ENCODE measurements at regions of chr11 and their contacts with region 1.

Region 1: GRCh38 chr11:109853156-109853776 is 239.9 kb upstream of the ZC3H12C start:
- DNase-seq: no peak
- ATAC-seq: peak; percentile 31
- H3K4me3 Mint-ChIP-seq: no peak overlapping the region
- H3K27ac Mint-ChIP-seq: no peak overlapping the region
- H3K4me1 Mint-ChIP-seq: no peaks in the 10 kb centered on the region
- H3K27me3 Mint-ChIP-seq: no peaks in the 10 kb centered on the region
- CTCF ChIP-seq: no peak

Region 2: GRCh38 chr11:109864834-109865547 is 11.7 kb after region 1 on chr11:
- CTCF ChIA-PET with region 1: interaction called, 9 read pairs
- POLR2A ChIA-PET with region 1: interaction called, 3 read pairs
- intact Hi-C with region 1: loop called (anchors 1 kb)
- DNase-seq: no peak
- ATAC-seq: no peak
- H3K4me3 Mint-ChIP-seq: no peak overlapping the region
- H3K27ac Mint-ChIP-seq: peak overlapping the region; percentile 74
- H3K4me1 Mint-ChIP-seq: peaks cover 17% of the 10 kb centered on the region
- H3K27me3 Mint-ChIP-seq: no peaks in the 10 kb centered on the region
- CTCF ChIP-seq: no peak

Region 3: GRCh38 chr11:109939166-109939810 is 86.0 kb after region 1 on chr11:
- CTCF ChIA-PET with region 1: interaction called, 38 read pairs
- POLR2A ChIA-PET with region 1: no interaction called
- intact Hi-C with region 1: loop called (anchors 1 kb)
- DNase-seq: no peak
- ATAC-seq: no peak
- H3K4me3 Mint-ChIP-seq: no peak overlapping the region
- H3K27ac Mint-ChIP-seq: no peak overlapping the region
- H3K4me1 Mint-ChIP-seq: no peaks in the 10 kb centered on the region
- H3K27me3 Mint-ChIP-seq: peaks cover 10% of the 10 kb centered on the region
- CTCF ChIP-seq: no peak

Region 4: GRCh38 chr11:110046775-110047380 is 193.6 kb after region 1 on chr11:
- CTCF ChIA-PET with region 1: no interaction called
- POLR2A ChIA-PET with region 1: no interaction called
- intact Hi-C with region 1: no loop called
- DNase-seq: no peak
- ATAC-seq: no peak
- H3K4me3 Mint-ChIP-seq: no peak overlapping the region
- H3K27ac Mint-ChIP-seq: no peak overlapping the region
- H3K4me1 Mint-ChIP-seq: no peaks in the 10 kb centered on the region
- H3K27me3 Mint-ChIP-seq: peaks cover 25% of the 10 kb centered on the region
- CTCF ChIP-seq: no peak

Region 5: GRCh38 chr11:110195845-110196754 is 342.8 kb after region 1 on chr11:
- CTCF ChIA-PET with region 1: interaction called, 4 read pairs
- POLR2A ChIA-PET with region 1: no interaction called
- intact Hi-C with region 1: loop called (anchors 2 kb)
- DNase-seq: no peak
- ATAC-seq: no peak
- H3K4me3 Mint-ChIP-seq: no peak overlapping the region
- H3K27ac Mint-ChIP-seq: no peak overlapping the region
- H3K4me1 Mint-ChIP-seq: peaks cover 11% of the 10 kb centered on the region
- H3K27me3 Mint-ChIP-seq: peaks cover 23% of the 10 kb centered on the region
- CTCF ChIP-seq: no peak

Region 6: GRCh38 chr11:110376711-110377324 is 523.6 kb after region 1 on chr11:
- CTCF ChIA-PET with region 1: interaction called, 4 read pairs
- POLR2A ChIA-PET with region 1: no interaction called
- intact Hi-C with region 1: loop called (anchors 5 kb)
- DNase-seq: no peak
- ATAC-seq: peak; percentile 58
- H3K4me3 Mint-ChIP-seq: peak overlapping the region; percentile 13
- H3K27ac Mint-ChIP-seq: no peak overlapping the region
- H3K4me1 Mint-ChIP-seq: peaks cover 5% of the 10 kb centered on the region
- H3K27me3 Mint-ChIP-seq: no peaks in the 10 kb centered on the region
- CTCF ChIP-seq: no peak

Measured in activated B cell treated with CpG ODN at 0.5 μM for 24 hours (primary cell).